Right ventricle myocardium inferior (tissue), 1 donor: ENCODE measurements at regions of chrX and their contacts with region 1.

Region 1: DNA sequence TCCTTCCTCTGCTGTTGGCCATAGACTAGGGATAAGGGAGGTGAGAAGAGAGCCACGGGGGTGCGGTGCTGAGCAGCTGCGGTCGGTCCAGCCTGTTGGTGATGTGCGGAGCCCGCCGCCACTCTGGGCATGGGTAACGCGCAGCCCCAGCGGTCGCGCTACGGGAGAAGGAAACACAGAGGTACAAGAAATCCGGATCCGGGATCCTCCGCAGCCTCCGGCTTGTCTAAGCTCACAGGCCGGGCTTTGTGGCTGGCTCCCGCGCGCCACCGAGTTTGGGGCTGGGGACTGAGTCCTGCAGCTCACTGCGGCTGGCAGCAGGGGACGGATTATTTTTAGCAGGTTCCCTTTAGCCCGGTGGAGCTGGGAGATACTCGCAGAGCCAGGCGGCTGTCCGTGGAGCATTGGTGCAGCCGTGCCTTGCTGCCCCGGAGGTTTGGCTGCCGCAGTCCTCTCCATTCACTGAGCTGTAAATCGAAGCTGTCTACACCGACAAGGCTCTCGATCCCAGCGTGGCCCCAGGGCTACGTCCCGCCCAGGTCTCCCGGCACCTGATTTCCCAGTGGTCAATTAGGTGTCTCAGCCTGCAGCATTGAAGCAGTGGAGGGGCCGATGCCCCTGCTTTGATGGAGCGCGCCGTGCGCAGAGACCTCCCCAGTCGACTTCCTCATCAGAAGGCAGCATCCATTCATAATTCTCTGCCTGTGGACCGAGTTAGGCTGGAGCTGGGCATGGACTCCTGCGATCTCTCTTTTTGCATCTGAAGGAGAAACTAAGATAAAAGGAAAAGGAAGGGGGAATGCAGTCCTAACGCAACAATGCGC is 81.9 kb upstream of the SCML1 start:
- DNase-seq: no peak
- ATAC-seq: peak; percentile 62

Region 2: DNA sequence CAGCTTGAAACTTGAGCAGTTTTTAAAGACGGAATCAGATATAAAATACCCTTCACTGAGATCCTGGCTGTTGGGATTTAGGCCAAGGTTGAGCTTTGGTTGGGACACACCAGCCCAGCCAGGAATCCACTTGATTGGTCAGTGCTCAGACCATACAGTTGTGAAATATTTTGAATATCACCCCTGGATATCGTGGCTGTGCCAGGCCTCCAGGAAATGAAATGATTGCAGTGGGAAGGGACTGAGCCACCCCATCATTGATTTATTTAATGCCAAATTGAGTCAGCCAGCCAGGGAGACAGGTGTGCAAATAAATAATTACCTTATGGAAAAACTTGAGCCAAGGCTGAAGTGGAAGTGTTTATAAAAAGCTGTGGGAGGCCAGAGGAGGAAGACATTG is 46.5 kb before region 1 on chrX:
- intact Hi-C with region 1: loop called (anchors 10 kb)
- DNase-seq: no peak
- ATAC-seq: no peak